ENCODE measurements at regions of chr1 and their contacts with region 1.

Region 1: GRCh38 chr1:108828022-108828961 is 28.6 kb downstream of the AKNAD1 start:
- DNase-seq: peak; percentile 72 to 85 (median 79)
- ATAC-seq: peak; percentile 52 to 71 (median 66)
- H3K4me3 ChIP-seq: no peak overlapping the region
- H3K27ac ChIP-seq: peak overlapping the region in 10 of 12 donors; percentile 8 to 88 (median 58)
- H3K4me1 ChIP-seq: peaks cover 0 to 38% (median 27%) of the 10 kb centered on the region in 12 donors
- H3K27me3 ChIP-seq: no peaks in the 10 kb centered on the region
- CTCF ChIP-seq: peak; percentile 56 to 89 (median 76)
- POLR2A ChIP-seq: no peak

Region 2: GRCh38 chr1:108877348-108878159 is 49.3 kb after region 1 on chr1:
- intact Hi-C with region 1: loop called in 3 of 10 experiments (anchors 1 to 5 kb)
- DNase-seq: no peak
- ATAC-seq: peak in 1 of 4 donors; percentile 4
- H3K4me3 ChIP-seq: peak overlapping the region; percentile 65 to 97 (median 80)
- H3K27ac ChIP-seq: peak overlapping the region in 7 of 12 donors; percentile 4 to 85 (median 36)
- H3K4me1 ChIP-seq: peaks cover 0 to 24% (median 4%) of the 10 kb centered on the region in 12 donors
- H3K27me3 ChIP-seq: no peaks in the 10 kb centered on the region
- CTCF ChIP-seq: no peak
- POLR2A ChIP-seq: no peak

Region 3: DNA sequence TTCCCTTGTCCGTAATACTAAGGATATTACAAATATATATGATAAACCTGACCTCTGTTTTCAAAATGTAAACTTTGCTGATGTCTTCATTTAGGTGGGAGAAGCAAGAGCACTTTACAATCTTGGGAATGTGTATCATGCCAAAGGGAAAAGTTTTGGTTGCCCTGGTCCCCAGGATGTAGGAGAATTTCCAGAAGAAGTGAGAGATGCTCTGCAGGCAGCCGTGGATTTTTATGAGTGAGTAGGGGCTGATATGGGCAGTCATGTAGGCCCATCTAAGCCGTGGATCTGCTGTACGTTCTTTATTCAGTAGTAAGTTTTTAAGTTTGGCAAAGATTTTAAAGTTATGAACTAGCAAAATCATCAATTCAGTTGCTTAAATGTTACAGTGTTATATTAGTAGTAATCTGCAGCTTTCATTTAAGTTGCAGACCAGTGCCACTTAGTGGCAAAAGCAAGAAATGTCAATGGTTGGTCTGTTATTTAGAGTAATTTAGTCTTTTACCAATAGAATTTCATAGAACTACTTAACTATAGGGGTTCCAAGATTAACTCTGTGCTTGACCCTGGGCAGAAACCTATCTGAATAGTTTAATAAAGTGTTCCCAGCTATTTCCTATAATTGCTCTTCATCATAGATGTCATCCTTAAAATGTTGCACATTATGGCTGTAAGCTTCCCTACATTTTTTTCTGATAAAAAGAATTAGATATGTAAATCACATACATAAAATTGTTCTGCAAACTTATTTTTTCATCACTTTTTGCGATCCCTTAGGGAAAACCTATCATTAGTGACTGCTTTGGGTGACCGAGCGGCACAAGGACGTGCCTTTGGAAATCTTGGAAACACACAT is 69.8 kb after region 1 on chr1:
- intact Hi-C with region 1: loop called (anchors 1 to 5 kb)
- DNase-seq: peak in 1 of 5 donors; percentile 17
- ATAC-seq: peak in 3 of 4 donors; percentile 68 to 74 (median 73)
- H3K4me3 ChIP-seq: no peak overlapping the region
- H3K27ac ChIP-seq: peak overlapping the region in 1 of 12 donors; percentile 71
- H3K4me1 ChIP-seq: no peaks in the 10 kb centered on the region
- H3K27me3 ChIP-seq: no peaks in the 10 kb centered on the region
- CTCF ChIP-seq: peak; percentile 65 to 84 (median 76)
- POLR2A ChIP-seq: no peak

Measured in heart left ventricle (tissue), 16 donors.